ENCODE measurements at regions of chr2 and their contacts with region 1.

Region 1: GRCh38 chr2:217510771-217511291 is 492.0 kb downstream of the TNS1 start:
- DNase-seq: peak in 1 of 2 donors; percentile 33
- ATAC-seq: peak; percentile 45

Region 2: DNA sequence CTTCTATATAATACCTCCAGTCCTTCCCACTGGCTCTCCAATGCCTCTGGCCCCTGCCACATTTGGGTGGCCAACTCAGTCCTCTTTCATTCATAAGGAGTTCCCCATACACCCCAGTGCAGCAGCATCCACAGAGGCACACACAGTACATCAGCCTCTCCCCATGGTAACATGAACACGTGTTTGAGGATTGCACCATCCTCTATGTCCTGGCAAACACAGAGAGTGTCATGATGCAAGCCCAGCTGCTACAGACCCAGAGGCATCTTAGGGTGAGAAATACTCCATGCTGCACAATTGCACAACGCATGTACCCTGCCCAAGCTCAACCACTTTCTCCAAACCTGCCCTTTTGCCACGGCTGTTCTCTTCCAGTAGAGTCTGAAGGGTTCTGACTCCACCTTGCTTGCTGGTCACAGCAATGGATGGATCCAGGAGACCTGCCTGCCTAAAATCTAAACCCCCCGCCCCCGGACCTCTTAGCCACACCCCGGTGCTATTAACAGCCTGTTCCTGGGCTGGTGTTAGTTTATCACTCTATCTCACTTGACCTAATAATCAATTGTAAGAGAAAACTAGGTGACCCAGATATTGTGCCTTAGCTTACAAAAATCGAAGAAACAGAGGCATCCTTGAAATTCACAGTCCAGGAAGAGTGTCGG is 826.9 kb before region 1 on chr2:
- intact Hi-C with region 1: loop called in 1 of 2 experiments (anchors 5 kb)
- DNase-seq: peak in 1 of 2 donors; percentile 61
- ATAC-seq: peak; percentile 6

Region 3: GRCh38 chr2:217064234-217065024 is 446.4 kb before region 1 on chr2:
- intact Hi-C with region 1: no loop called
- DNase-seq: no peak
- ATAC-seq: no peak

Region 4: DNA sequence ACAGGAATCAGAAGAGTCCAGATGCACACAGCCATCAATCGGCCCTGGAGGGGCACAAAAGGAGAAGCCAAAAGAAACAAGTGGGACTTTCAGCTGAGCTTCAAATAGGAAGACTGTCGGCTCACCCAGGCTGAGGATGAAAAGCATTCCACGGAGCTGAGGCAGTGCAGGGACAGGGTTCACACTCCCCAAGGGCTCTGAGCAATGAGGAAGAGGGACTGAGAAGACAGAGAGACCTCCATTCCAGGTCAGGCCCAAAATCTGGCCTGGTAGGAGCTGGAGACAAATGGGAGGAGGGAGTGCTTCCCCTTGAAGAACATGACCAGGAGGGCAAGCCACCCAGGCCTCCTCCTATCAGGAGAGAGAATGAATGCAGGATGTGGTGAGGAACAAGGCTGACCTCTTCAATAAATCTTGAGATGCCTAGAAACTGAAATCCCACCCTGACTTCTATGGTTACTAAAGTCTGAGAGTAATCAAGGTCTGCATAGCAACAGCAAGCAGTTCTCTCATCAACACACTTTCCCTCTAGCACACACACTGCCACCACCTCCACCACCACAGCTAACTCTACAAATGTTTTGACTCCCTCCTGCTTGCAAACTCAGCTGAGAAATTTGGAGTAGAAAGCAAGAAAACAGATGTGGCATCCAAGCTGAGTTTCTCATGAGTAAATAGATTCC is 57.6 kb after region 1 on chr2:
- intact Hi-C with region 1: no loop called
- DNase-seq: no peak
- ATAC-seq: no peak

Measured in left colon (tissue), 2 donors.